Sigmoid colon (tissue), 7 donors: ENCODE measurements at regions of chr1 and their contacts with region 1.

Region 1: GRCh38 chr1:27300341-27301051 is 21.5 kb upstream of the TMEM222 start:
- DNase-seq: peak; percentile 95
- H3K4me3 ChIP-seq: no peak overlapping the region
- H3K27ac ChIP-seq: peak overlapping the region; percentile 84 to 96 (median 92)
- H3K4me1 ChIP-seq: peaks cover 2 to 47% (median 46%) of the 10 kb centered on the region in 4 donors
- H3K27me3 ChIP-seq: no peaks in the 10 kb centered on the region
- CTCF ChIP-seq: peak; percentile 99
- EP300 ChIP-seq: no peak
- POLR2A ChIP-seq: no peak

Region 2: DNA sequence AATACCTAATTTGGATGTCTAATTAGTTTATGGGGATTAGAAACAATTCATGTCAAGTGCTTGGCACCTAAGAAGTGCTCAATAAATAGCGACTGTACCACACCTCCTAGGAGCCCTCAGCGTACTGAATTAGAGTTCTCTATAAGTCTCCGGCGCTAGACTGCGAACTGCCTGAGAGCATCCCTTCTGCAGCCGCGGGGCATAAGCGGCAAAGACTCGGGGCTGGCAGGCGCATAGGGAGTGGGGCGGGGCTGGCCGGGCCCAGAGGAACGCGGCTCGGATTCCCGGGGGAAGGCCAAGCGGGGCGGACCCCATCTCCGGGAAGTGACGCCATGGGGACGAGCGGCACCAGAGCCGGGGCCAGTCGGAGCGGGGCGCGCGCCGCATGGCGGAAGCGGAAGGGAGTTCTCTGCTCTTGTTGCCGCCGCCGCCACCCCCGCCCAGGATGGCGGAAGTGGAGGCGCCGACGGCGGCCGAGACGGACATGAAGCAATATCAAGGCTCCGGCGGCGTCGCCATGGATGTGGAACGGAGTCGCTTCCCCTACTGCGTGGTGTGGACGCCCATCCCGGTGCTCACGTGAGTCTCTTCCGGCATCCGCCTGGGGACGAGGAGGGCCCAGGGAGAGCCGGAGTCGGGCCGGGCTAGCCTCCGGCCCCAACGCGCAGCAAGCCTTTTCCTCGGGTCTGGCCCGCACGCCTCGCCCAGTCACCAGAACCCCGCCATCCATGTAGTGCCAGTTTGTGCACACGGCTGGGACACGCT is 21.5 kb after region 1 on chr1 and contains the start of gene TMEM222:
- intact Hi-C with region 1: loop called (anchors 2 kb)
- DNase-seq: peak; percentile 99
- H3K4me3 ChIP-seq: peak within 1 kb of the TSS; percentile 66 to 92 (median 87)
- H3K27ac ChIP-seq: peak within 1 kb of the TSS; percentile 79 to 90 (median 88)
- H3K4me1 ChIP-seq: peaks cover 0 to 38% (median 25%) of the 10 kb centered on the region in 4 donors
- H3K27me3 ChIP-seq: no peaks in the 10 kb centered on the region
- CTCF ChIP-seq: peak in 2 of 4 experiments; percentile 15 to 23
- EP300 ChIP-seq: peak in 1 of 4 donors; percentile 76
- POLR2A ChIP-seq: peak; percentile 25 to 48
- total RNA-seq, gene TMEM222: 18.9 to 20.9 (median 19.6) TPM

Region 3: DNA sequence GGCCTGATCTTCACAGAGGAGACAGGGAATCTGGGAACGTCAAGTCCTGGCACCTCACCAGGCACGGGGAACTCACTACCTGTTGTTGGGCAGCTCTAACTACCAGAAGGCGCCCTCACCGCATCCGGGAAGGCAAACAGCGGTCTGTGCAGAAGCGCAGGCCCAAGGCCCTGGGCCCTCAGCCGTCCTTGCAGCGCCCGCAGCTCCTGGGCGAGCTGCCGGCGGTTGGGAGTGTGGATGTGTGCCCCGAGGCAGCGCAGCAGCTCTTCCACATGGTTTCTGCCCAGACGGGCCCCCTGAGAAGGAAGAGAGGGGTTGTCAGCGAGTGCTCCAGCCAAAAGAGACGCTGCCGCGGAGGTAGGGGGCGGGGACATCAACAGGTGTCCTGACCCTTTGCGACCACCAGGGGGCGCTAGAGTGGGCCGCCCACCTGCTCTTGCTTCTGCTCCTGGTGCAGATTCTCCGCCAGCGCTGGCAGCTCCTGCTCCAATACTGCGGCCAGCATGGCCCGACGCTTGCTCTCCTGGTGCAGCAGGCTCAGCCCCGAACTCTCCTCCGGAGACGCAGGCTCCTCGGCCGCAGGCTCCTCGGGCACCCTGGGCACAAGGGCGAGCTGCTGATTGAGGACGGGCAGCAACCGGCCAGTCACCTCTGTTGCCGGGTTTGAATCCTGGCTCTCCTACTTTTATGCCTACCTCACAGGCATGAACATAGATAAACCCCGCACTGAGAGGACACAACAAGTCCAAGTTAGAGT is 57.0 kb after region 1 on chr1:
- intact Hi-C with region 1: loop called (anchors 5 kb)
- DNase-seq: peak; percentile 90
- H3K4me3 ChIP-seq: peak overlapping the region in 1 of 4 donors; percentile 29
- H3K27ac ChIP-seq: peak overlapping the region in 1 of 4 donors; percentile 33
- H3K4me1 ChIP-seq: peaks cover 0 to 21% (median 17%) of the 10 kb centered on the region in 4 donors
- H3K27me3 ChIP-seq: no peaks in the 10 kb centered on the region
- CTCF ChIP-seq: peak; percentile 92 to 99 (median 96)
- EP300 ChIP-seq: no peak
- POLR2A ChIP-seq: no peak

Region 4: GRCh38 chr1:27489910-27490741 is 189.6 kb after region 1 on chr1 and contains the start of gene WASF2:
- intact Hi-C with region 1: loop called (anchors 10 kb)
- DNase-seq: peak; percentile 99
- H3K4me3 ChIP-seq: peak within 1 kb of the TSS; percentile 78 to 98 (median 90)
- H3K27ac ChIP-seq: peak within 1 kb of the TSS; percentile 94 to 99 (median 98)
- H3K4me1 ChIP-seq: peaks cover 0 to 57% (median 35%) of the 10 kb centered on the region in 4 donors
- H3K27me3 ChIP-seq: no peaks in the 10 kb centered on the region
- CTCF ChIP-seq: no peak
- EP300 ChIP-seq: peak in 1 of 4 donors; percentile 37
- POLR2A ChIP-seq: peak; percentile 85 to 95
- total RNA-seq, gene WASF2: 43.9 to 63.2 (median 59.9) TPM